Activated CD4-positive, alpha-beta T cell treated with anti-CD3 and anti-CD28 coated beads, Interleukin-2, amount 10 ng/mL, durations not matched to agents 24 days and 14 days (primary cell): ENCODE measurements at regions of chr13 and their contacts with region 1.

Region 1: GRCh38 chr13:99087096-99087953 is 109.5 kb upstream of the DOCK9 start:
- DNase-seq: peak; percentile 98
- H3K4me3 Mint-ChIP-seq: peak overlapping the region; percentile 97
- H3K27ac Mint-ChIP-seq: peak overlapping the region; percentile 99
- H3K4me1 Mint-ChIP-seq: peaks cover 35% of the 10 kb centered on the region
- H3K27me3 Mint-ChIP-seq: peaks cover 1% of the 10 kb centered on the region

Region 2: DNA sequence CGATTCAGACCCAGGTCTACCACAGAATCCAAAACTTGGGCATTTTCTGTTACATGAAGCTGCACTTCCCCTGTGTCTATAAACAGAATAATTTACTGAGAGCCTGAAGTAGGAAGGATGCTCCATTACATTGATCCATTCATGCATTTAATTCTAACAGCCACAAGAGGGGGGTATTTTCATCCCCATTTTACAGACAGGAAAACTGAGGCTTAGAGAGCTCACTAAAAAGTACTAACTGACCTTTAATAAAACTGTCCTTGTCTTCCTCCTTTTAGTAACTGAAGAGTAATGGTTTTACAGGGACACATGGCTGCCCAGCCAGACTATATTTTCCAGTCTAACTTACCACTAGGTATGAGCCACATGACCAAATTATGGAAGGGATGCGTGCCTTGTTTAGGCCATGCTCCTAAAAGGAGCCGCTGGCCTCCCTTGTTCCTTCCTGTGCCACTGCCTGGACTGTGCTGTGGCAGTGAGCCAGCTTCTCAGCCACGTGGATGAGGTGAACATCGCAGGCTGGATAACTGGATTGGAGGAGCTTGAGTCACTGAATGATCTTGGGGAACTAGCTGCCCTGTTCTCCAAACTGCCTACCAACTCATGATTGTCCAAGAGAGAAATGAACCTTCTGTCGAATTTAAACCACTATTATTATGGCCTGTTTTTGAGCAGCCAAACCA is 217.8 kb before region 1 on chr13:
- intact Hi-C with region 1: loop called (anchors 5 kb)
- DNase-seq: no peak
- H3K4me3 Mint-ChIP-seq: no peak overlapping the region
- H3K27ac Mint-ChIP-seq: no peak overlapping the region
- H3K4me1 Mint-ChIP-seq: peaks cover 25% of the 10 kb centered on the region
- H3K27me3 Mint-ChIP-seq: no peaks in the 10 kb centered on the region

Region 3: GRCh38 chr13:99046851-99047250 is 40.5 kb before region 1 on chr13:
- intact Hi-C with region 1: loop called (anchors 1 kb)
- DNase-seq: no peak
- H3K4me3 Mint-ChIP-seq: peak overlapping the region; percentile 73
- H3K27ac Mint-ChIP-seq: peak overlapping the region; percentile 90
- H3K4me1 Mint-ChIP-seq: peaks cover 79% of the 10 kb centered on the region
- H3K27me3 Mint-ChIP-seq: no peaks in the 10 kb centered on the region

Region 4: DNA sequence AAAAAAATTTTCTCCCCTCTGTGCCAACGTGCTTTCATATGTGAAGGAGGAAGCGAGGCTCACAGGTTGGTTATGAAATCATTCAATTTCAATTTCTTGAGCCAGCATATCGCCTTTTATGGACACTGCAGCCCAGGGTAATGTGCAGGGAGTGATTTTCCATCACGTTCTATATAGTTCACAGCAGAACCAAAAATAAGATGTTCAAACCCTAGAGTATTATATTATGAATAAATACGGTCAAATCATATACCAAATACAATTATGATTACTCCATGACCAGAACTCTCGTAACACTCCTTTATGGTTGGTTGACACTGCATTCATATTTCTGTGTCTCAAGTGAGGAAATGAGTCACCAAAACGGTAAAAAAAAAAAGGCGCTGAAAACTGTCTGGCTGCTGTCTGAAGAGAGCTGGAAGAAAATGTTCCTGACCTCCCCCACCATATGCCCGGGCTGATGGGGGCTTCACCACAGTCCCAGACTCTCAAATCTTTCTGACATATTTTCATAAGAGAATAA is 37.5 kb after region 1 on chr13:
- intact Hi-C with region 1: loop called (anchors 2 kb)
- DNase-seq: peak; percentile 68
- H3K4me3 Mint-ChIP-seq: peak overlapping the region; percentile 29
- H3K27ac Mint-ChIP-seq: peak overlapping the region; percentile 46
- H3K4me1 Mint-ChIP-seq: peaks cover 25% of the 10 kb centered on the region
- H3K27me3 Mint-ChIP-seq: peaks cover 4% of the 10 kb centered on the region

Region 5: GRCh38 chr13:99144306-99144705 is 57.0 kb after region 1 on chr13:
- intact Hi-C with region 1: no loop called
- DNase-seq: no peak
- H3K4me3 Mint-ChIP-seq: no peak overlapping the region
- H3K27ac Mint-ChIP-seq: no peak overlapping the region
- H3K4me1 Mint-ChIP-seq: peaks cover 4% of the 10 kb centered on the region
- H3K27me3 Mint-ChIP-seq: peaks cover 28% of the 10 kb centered on the region

Region 6: GRCh38 chr13:99258210-99258860 is 171.0 kb after region 1 on chr13 and contains the start of gene GPR18:
- intact Hi-C with region 1: loop called (anchors 2 kb)
- DNase-seq: peak; percentile 80
- H3K4me3 Mint-ChIP-seq: peak within 1 kb of the TSS; percentile 92
- H3K27ac Mint-ChIP-seq: peak within 1 kb of the TSS; percentile 96
- H3K4me1 Mint-ChIP-seq: peaks cover 51% of the 10 kb centered on the region
- H3K27me3 Mint-ChIP-seq: no peaks in the 10 kb centered on the region
- total RNA-seq, gene GPR18: 5.9 and 6.3 TPM in 2 replicates

Region 7: GRCh38 chr13:99356158-99357091 is 269.1 kb after region 1 on chr13:
- intact Hi-C with region 1: loop called (anchors 5 kb)
- DNase-seq: peak; percentile 94
- H3K4me3 Mint-ChIP-seq: peak overlapping the region; percentile 83
- H3K27ac Mint-ChIP-seq: peak overlapping the region; percentile 99
- H3K4me1 Mint-ChIP-seq: peaks cover 92% of the 10 kb centered on the region
- H3K27me3 Mint-ChIP-seq: no peaks in the 10 kb centered on the region

Region 8: GRCh38 chr13:99528547-99528946 is 441.2 kb after region 1 on chr13:
- intact Hi-C with region 1: no loop called
- DNase-seq: peak; percentile 78
- H3K4me3 Mint-ChIP-seq: no peak overlapping the region
- H3K27ac Mint-ChIP-seq: no peak overlapping the region
- H3K4me1 Mint-ChIP-seq: peaks cover 38% of the 10 kb centered on the region
- H3K27me3 Mint-ChIP-seq: no peaks in the 10 kb centered on the region